ENCODE measurements at regions of chr22 and their contacts with region 1.

Region 1: GRCh38 chr22:30423982-30424963 is 1.3 kb upstream of the MTFP1 start:
- DNase-seq: peak; percentile 82 to 99 (median 98)
- ATAC-seq: peak; percentile 92
- H3K4me3 ChIP-seq: peak overlapping the region; percentile 76
- H3K4me3 Mint-ChIP-seq: peak overlapping the region; percentile 94 to 99 (median 98)
- H3K27ac ChIP-seq: peak overlapping the region; percentile 97
- H3K27ac Mint-ChIP-seq: peak overlapping the region; percentile 96 to 100 (median 98)
- H3K4me1 ChIP-seq: peaks cover 28 to 36% of the 10 kb centered on the region in 2 donors
- H3K4me1 Mint-ChIP-seq: peaks cover 30 to 71% (median 64%) of the 10 kb centered on the region in 7 donors
- H3K27me3 ChIP-seq: no peaks in the 10 kb centered on the region
- H3K27me3 Mint-ChIP-seq: peaks cover 0 to 4% (median 0%) of the 10 kb centered on the region in 5 donors

Region 2: GRCh38 chr22:29580200-29580810 is 844.0 kb before region 1 on chr22:
- CTCF ChIA-PET with region 1: no interaction called
- POLR2A ChIA-PET with region 1: no interaction called
- intact Hi-C with region 1: no loop called
- DNase-seq: peak in 1 of 9 donors; percentile 26
- ATAC-seq: no peak
- H3K4me3 ChIP-seq: peak overlapping the region; percentile 75
- H3K4me3 Mint-ChIP-seq: peak overlapping the region; percentile 88 to 96 (median 93)
- H3K27ac ChIP-seq: peak overlapping the region; percentile 69
- H3K27ac Mint-ChIP-seq: peak overlapping the region; percentile 78 to 95 (median 91)
- H3K4me1 ChIP-seq: peaks cover 0 to 10% of the 10 kb centered on the region in 2 donors
- H3K4me1 Mint-ChIP-seq: peaks cover 11 to 20% (median 16%) of the 10 kb centered on the region in 7 donors
- H3K27me3 ChIP-seq: no peaks in the 10 kb centered on the region
- H3K27me3 Mint-ChIP-seq: no peaks in the 10 kb centered on the region

Region 3: GRCh38 chr22:30289134-30289979 is 134.9 kb before region 1 on chr22 and contains the start of gene CASTOR1:
- CTCF ChIA-PET with region 1: interaction called, 35 read pairs
- POLR2A ChIA-PET with region 1: interaction called, 13 read pairs
- intact Hi-C with region 1: loop called (anchors 1 kb)
- DNase-seq: peak; percentile 78 to 97 (median 84)
- ATAC-seq: peak; percentile 89
- H3K4me3 ChIP-seq: peak within 1 kb of the TSS; percentile 80
- H3K4me3 Mint-ChIP-seq: peak within 1 kb of the TSS; percentile 87 to 93 (median 90)
- H3K27ac ChIP-seq: peak within 1 kb of the TSS; percentile 75
- H3K27ac Mint-ChIP-seq: peak within 1 kb of the TSS; percentile 85 to 96 (median 92)
- H3K4me1 ChIP-seq: peaks cover 25 to 27% of the 10 kb centered on the region in 2 donors
- H3K4me1 Mint-ChIP-seq: peaks cover 12 to 55% (median 39%) of the 10 kb centered on the region in 7 donors
- H3K27me3 ChIP-seq: no peaks in the 10 kb centered on the region
- H3K27me3 Mint-ChIP-seq: no peaks in the 10 kb centered on the region
- total RNA-seq, gene CASTOR1: 12.4 to 21.3 (median 17.9) TPM

Region 4: DNA sequence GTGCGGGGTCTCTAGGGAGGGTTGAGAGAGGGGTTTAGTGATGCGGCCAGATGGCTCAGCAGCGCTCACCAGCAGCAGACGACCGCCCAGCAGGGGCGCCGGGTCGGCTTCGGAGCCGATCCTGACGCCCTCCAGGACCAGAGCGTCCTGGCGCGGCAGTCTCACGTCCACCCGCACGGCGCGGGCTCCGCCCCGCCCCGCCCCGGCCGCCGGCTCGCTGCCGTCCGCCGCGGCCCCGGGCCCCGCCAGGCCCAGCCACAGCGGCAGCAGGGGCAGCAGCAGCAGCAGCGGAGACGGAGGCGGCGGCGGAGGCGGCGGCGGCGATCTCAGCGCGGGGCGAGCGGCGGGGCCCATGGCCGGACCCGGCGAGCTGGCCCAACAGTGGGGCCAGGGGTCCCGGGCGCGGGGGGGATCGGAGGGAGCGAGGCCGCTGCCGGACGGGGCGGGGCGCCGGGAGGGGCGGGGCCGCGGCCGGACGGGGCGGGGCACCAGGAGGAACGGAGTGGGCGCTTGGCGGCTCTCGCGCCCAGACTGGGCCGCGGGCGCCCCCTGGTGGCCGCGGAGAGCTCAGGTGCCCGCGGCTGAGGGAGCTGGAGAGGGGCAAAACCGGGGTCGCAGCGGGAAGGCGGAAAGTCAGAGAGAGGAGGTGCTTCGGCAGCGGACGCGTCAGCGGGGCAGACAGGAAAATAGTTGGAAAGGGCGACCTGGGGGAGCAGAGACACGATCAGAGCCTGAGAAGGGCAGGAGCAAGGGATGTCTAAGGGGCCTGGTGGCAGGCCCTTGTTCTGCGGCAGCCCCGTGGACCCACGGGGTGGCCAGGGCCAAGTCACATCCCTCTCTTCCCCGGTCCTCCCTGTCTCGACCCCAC is 37.1 kb before region 1 on chr22 and contains the start of gene RNF215:
- CTCF ChIA-PET with region 1: interaction called, 78 read pairs
- POLR2A ChIA-PET with region 1: interaction called, 158 read pairs
- intact Hi-C with region 1: loop called (anchors 1 kb)
- DNase-seq: peak; percentile 55 to 92 (median 82)
- ATAC-seq: peak; percentile 97
- H3K4me3 ChIP-seq: no peak within 1 kb of the TSS
- H3K4me3 Mint-ChIP-seq: peak within 1 kb of the TSS; percentile 54 to 83 (median 78)
- H3K27ac ChIP-seq: peak within 1 kb of the TSS; percentile 26
- H3K27ac Mint-ChIP-seq: peak within 1 kb of the TSS in 6 of 9 donors; percentile 41 to 86 (median 70)
- H3K4me1 ChIP-seq: peaks cover 3 to 10% of the 10 kb centered on the region in 2 donors
- H3K4me1 Mint-ChIP-seq: peaks cover 16 to 22% (median 20%) of the 10 kb centered on the region in 7 donors
- H3K27me3 ChIP-seq: no peaks in the 10 kb centered on the region
- H3K27me3 Mint-ChIP-seq: peaks cover 0 to 4% (median 0%) of the 10 kb centered on the region in 5 donors
- total RNA-seq, gene RNF215: 4.3 to 10.8 (median 5.3) TPM

Region 5: GRCh38 chr22:30413745-30414524 is 10.3 kb before region 1 on chr22:
- CTCF ChIA-PET with region 1: interaction called, 19 read pairs
- POLR2A ChIA-PET with region 1: interaction called, 90 read pairs
- intact Hi-C with region 1: loop called in 1 of 2 experiments (anchors 1 kb)
- DNase-seq: peak in 4 of 9 donors; percentile 25 to 44 (median 30)
- ATAC-seq: peak; percentile 71
- H3K4me3 ChIP-seq: peak overlapping the region; percentile 40
- H3K4me3 Mint-ChIP-seq: peak overlapping the region; percentile 42 to 79 (median 72)
- H3K27ac ChIP-seq: peak overlapping the region; percentile 62
- H3K27ac Mint-ChIP-seq: peak overlapping the region; percentile 68 to 99 (median 91)
- H3K4me1 ChIP-seq: peaks cover 0 to 38% of the 10 kb centered on the region in 2 donors
- H3K4me1 Mint-ChIP-seq: peaks cover 22 to 65% (median 56%) of the 10 kb centered on the region in 7 donors
- H3K27me3 ChIP-seq: no peaks in the 10 kb centered on the region
- H3K27me3 Mint-ChIP-seq: no peaks in the 10 kb centered on the region

Region 6: GRCh38 chr22:30968924-30969539 is 544.8 kb after region 1 on chr22 and contains the start of gene TUG1:
- CTCF ChIA-PET with region 1: no interaction called
- POLR2A ChIA-PET with region 1: interaction called, 3 read pairs
- intact Hi-C with region 1: loop called in 1 of 2 experiments (anchors 1 kb)
- DNase-seq: peak; percentile 88 to 98 (median 97)
- ATAC-seq: peak; percentile 96
- H3K4me3 ChIP-seq: peak within 1 kb of the TSS; percentile 59
- H3K4me3 Mint-ChIP-seq: peak within 1 kb of the TSS; percentile 90 to 96 (median 93)
- H3K27ac ChIP-seq: peak within 1 kb of the TSS; percentile 94
- H3K27ac Mint-ChIP-seq: peak within 1 kb of the TSS; percentile 90 to 98 (median 97)
- H3K4me1 ChIP-seq: peaks cover 22 to 23% of the 10 kb centered on the region in 2 donors
- H3K4me1 Mint-ChIP-seq: peaks cover 12 to 67% (median 58%) of the 10 kb centered on the region in 7 donors
- H3K27me3 ChIP-seq: no peaks in the 10 kb centered on the region
- H3K27me3 Mint-ChIP-seq: peaks cover 0 to 4% (median 0%) of the 10 kb centered on the region in 5 donors
- total RNA-seq, gene TUG1: 82.7 to 159 (median 113) TPM